MCF 10A (cell line): ENCODE measurements at regions of chr12 and their contacts with region 1.

Region 1: DNA sequence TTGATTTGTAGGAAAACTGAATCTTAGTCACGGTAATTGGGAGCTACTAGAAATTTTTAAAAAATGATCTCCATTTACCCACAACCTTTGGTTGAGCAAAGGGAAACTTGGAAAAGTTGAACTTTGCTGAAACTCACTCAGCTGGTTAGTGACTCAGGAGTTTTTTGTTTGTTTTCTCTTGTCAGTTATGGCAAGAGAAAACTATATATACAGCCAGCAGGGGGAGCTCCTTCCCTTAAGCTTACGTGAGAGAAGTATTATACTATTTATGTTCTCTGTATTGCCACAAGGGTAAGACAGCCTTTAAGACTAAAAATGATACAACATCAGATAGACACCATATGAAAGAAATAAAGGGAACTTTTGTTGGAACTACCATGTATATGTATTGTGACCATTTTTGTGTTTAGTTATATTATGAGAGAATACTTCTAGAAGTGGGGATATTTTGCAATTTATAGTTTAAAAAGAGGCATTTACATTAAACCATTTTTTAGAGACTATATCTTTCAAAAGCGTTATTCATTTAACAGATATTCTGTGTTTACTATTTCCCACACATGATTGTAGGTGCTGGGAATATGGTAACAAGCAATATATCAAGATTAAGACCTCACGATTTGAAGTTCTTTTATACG is 28.1 kb upstream of the TBC1D30 start:
- DNase-seq: peak; percentile 92
- H3K4me3 Mint-ChIP-seq: no peak overlapping the region
- H3K27ac Mint-ChIP-seq: no peak overlapping the region
- H3K4me1 Mint-ChIP-seq: peaks cover 5% of the 10 kb centered on the region
- H3K27me3 Mint-ChIP-seq: no peaks in the 10 kb centered on the region
- CTCF ChIP-seq: peak; percentile 65

Region 2: DNA sequence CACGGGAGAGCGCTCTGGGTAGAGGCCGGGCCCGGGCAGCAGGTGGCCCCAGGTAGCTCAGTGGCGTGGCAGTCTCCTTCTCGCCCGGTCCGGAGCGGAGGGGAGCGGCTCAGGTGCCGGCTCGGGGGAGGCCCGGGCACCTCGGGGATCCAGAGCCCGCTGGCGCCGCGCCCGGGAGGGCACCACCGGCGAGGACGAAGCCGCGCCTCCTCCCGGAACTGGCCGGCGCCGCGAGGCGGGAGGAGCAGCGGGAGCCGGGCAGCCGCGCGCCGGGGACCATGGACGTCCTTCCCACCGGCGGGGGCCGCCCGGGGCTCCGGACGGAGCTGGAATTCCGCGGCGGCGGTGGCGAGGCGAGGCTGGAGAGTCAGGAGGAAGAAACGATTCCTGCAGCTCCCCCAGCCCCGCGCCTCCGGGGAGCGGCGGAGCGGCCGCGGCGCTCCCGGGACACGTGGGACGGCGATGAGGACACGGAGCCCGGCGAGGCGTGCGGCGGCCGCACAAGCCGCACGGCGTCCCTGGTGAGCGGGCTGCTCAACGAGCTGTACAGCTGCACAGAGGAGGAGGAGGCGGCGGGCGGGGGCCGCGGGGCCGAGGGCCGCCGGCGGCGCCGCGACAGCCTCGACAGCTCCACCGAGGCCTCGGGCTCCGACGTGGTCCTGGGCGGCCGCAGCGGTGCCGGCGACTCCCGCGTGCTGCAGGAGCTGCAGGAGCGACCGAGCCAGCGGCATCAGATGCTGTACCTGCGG is 15.6 kb before region 1 on chr12:
- CTCF ChIA-PET with region 1: interaction called, 27 read pairs
- POLR2A ChIA-PET with region 1: interaction called, 6 read pairs
- intact Hi-C with region 1: no loop called
- DNase-seq: peak; percentile 57
- H3K4me3 Mint-ChIP-seq: peak overlapping the region; percentile 80
- H3K27ac Mint-ChIP-seq: peak overlapping the region; percentile 23
- H3K4me1 Mint-ChIP-seq: peaks cover 7% of the 10 kb centered on the region
- H3K27me3 Mint-ChIP-seq: peaks cover 17% of the 10 kb centered on the region
- CTCF ChIP-seq: no peak

Region 3: DNA sequence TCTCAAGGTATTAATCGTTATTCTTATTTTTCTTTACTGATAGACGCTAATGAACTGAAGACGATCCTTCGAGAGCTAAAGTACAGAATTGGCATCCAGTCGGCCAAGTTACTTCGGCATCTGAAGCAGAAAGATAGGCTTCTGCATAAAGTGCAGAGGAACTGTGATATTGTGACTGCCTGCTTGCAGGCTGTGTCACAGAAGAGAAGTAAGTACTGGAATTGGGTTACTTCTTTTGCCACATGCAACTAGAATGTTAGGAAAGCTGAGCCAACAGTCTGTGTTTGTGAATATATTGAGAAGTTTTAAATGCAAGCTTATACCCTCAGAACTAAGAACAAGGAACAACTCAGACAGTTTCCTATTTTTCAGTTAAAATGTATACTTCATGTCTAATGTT is 10.5 kb before region 1 on chr12:
- CTCF ChIA-PET with region 1: interaction called, 27 read pairs
- POLR2A ChIA-PET with region 1: interaction called, 6 read pairs
- intact Hi-C with region 1: no loop called
- DNase-seq: no peak
- H3K4me3 Mint-ChIP-seq: no peak overlapping the region
- H3K27ac Mint-ChIP-seq: no peak overlapping the region
- H3K4me1 Mint-ChIP-seq: peaks cover 7% of the 10 kb centered on the region
- H3K27me3 Mint-ChIP-seq: no peaks in the 10 kb centered on the region
- CTCF ChIP-seq: no peak

Region 4: DNA sequence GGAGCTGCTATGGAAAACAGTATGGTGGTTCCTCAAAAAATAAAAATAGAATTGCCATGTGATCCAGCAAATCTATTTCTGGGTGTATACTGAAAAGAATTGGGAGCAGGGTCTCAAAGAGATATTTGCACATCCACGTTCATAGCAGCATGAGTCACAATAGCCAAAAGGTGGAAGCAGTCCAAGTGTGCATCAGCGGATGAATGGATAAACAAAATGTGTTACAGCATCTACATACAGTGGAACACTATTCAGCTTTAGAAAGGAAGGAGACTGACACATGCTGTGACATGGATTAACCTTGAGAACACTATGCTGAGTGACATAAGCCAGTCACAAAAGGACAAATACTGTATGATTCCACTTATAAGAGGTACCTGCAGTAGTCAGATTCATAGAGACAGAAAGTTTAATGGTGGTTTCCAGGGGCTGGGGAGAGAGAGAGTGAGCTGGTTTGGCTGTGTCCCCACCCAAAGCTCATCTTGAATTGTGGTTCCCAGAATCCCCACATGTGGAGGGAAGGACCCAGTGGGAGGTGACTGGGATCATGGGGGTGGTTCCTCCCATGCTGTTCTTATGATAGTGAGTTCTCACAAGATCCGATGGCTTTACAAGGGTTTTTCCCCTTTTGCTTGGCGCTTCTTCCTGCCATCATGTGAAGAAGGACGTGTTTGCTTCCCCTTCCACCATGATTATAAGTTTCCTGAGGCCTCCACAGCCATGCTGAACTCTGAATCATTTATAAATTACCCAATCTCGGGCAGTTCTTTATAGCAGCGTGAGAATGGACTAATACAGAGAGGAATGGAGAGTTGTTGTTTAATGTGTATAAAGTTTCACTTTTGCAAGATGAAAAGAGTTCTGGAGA is 10.5 kb after region 1 on chr12:
- CTCF ChIA-PET with region 1: interaction called, 18 read pairs
- POLR2A ChIA-PET with region 1: interaction called, 5 read pairs
- intact Hi-C with region 1: no loop called
- DNase-seq: peak; percentile 93
- H3K4me3 Mint-ChIP-seq: no peak overlapping the region
- H3K27ac Mint-ChIP-seq: peak overlapping the region; percentile 46
- H3K4me1 Mint-ChIP-seq: peaks cover 36% of the 10 kb centered on the region
- H3K27me3 Mint-ChIP-seq: no peaks in the 10 kb centered on the region
- CTCF ChIP-seq: no peak

Region 5: DNA sequence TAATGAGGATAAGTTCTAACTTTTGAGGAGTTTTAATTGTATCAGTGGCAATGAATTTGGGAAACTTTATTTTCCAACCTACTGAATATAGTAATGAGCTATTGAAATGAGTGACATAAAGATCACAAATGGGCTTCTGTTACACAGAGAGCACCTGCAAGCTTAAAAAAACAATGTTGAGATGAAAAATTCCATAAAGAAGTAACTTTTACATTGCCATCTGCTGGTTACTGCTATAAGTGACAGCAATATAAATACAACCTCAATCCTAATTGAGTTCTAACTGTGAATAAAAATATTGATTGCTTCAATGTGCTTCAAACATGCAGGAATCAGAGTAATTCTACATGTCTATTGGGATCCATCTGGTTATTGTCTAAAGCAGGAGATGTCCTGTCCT is 310.6 kb after region 1 on chr12:
- CTCF ChIA-PET with region 1: interaction called, 43 read pairs
- POLR2A ChIA-PET with region 1: no interaction called
- intact Hi-C with region 1: loop called (anchors 1 kb)
- DNase-seq: peak; percentile 9
- H3K4me3 Mint-ChIP-seq: no peak overlapping the region
- H3K27ac Mint-ChIP-seq: no peak overlapping the region
- H3K4me1 Mint-ChIP-seq: no peaks in the 10 kb centered on the region
- H3K27me3 Mint-ChIP-seq: peaks cover 20% of the 10 kb centered on the region
- CTCF ChIP-seq: no peak

Region 6: DNA sequence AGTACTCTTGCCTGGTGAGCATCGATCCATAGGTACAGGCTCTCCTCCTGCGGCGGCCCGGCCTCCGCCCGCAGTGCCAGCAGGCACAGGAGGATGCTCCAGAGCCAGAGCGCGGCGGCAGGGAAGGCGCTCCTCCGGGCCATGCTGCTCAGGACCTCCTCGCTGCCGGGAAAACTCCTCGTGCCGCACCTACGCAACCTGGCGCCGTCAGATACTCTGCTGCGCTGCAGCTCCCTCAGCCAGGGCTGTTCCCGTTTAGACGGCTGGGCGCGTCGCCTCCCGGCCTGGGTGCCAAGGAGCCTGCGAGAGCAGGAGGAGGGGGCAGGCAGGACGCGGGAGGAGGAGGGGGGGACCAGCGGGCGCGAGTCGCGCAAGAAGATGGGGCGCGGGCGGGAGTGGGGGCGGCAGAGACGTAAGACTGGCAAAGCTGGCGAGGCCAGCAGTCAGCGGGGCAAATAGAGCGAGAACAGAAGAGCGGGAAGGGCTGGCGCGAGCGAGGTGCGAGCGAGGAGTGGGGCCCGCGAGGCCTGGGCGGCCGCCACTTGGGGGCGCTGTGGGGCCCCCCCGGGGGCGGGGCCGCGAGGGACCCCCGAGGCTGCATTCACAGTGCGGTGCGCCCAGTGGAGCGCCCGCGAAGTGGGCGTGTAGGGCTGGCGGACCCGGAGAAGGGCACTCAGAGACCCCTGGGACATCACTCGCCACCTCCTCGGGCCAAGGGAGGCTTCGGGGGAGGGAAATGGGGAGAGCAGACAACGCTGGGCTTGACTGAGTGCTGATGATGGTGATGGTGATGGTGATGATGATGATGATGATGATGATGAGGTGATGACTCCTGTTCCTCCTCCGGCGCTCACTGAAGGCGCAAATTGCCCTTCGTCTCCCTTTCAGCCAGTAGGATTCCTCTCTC is 325.0 kb after region 1 on chr12 and contains the start of gene WIF1:
- CTCF ChIA-PET with region 1: interaction called, 13 read pairs
- POLR2A ChIA-PET with region 1: no interaction called
- intact Hi-C with region 1: loop called (anchors 1 kb)
- DNase-seq: no peak
- H3K4me3 Mint-ChIP-seq: no peak within 1 kb of the TSS
- H3K27ac Mint-ChIP-seq: no peak within 1 kb of the TSS
- H3K4me1 Mint-ChIP-seq: no peaks in the 10 kb centered on the region
- H3K27me3 Mint-ChIP-seq: peaks cover 68% of the 10 kb centered on the region
- CTCF ChIP-seq: peak; percentile 43
- total RNA-seq, gene WIF1: not detected in 2 replicates